MCF 10A (cell line): ENCODE measurements at regions of chr9 and their contacts with region 1.

Region 1: GRCh38 chr9:19946441-19947109 is 157.7 kb upstream of the SLC24A2 start:
- DNase-seq: peak; percentile 11
- H3K4me3 Mint-ChIP-seq: no peak overlapping the region
- H3K27ac Mint-ChIP-seq: no peak overlapping the region
- H3K4me1 Mint-ChIP-seq: no peaks in the 10 kb centered on the region
- H3K27me3 Mint-ChIP-seq: peaks cover 16% of the 10 kb centered on the region
- CTCF ChIP-seq: peak; percentile 28

Region 2: GRCh38 chr9:20220286-20220685 is 273.7 kb after region 1 on chr9:
- CTCF ChIA-PET with region 1: no interaction called
- POLR2A ChIA-PET with region 1: no interaction called
- intact Hi-C with region 1: no loop called
- DNase-seq: peak; percentile 28
- H3K4me3 Mint-ChIP-seq: no peak overlapping the region
- H3K27ac Mint-ChIP-seq: peak overlapping the region; percentile 13
- H3K4me1 Mint-ChIP-seq: peaks cover 26% of the 10 kb centered on the region
- H3K27me3 Mint-ChIP-seq: no peaks in the 10 kb centered on the region
- CTCF ChIP-seq: no peak

Region 3: GRCh38 chr9:20407012-20407411 is 460.4 kb after region 1 on chr9:
- CTCF ChIA-PET with region 1: interaction called, 10 read pairs
- POLR2A ChIA-PET with region 1: no interaction called
- intact Hi-C with region 1: no loop called
- DNase-seq: no peak
- H3K4me3 Mint-ChIP-seq: no peak overlapping the region
- H3K27ac Mint-ChIP-seq: no peak overlapping the region
- H3K4me1 Mint-ChIP-seq: no peaks in the 10 kb centered on the region
- H3K27me3 Mint-ChIP-seq: peaks cover 36% of the 10 kb centered on the region
- CTCF ChIP-seq: peak; percentile 10